ENCODE measurements at regions of chr12 and their contacts with region 1.

Region 1: DNA sequence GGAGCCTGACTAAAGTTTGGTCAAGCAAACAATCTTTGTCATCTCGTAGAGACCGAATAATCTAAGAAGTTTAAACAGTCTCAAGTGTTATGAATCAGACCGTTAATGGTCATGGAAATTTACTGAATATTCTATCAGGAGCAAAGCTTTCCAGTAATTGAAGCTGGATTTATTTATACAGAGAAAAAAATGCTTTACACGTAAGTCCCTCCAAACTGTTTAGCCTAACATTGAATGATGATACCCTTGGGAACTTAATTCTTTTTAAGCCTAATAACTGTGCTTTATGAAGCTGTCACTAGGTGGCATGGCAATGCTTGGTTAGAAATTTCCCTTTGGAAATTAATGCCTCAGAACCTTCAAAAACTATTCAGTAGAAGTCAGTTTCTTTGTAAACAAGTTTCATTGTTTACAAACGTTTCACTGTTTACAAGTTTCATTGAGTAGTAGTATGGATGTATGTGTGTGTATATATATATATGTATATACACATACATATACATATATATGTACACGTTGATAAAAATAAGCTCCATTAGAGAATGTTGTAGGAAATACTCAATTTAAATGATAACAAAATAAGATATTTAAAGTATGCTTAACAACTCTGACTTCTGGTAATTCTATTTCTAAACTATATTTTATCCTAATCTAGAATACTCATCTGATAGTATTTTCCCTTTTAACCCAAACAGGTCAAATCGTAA is 32.1 kb downstream of the DEPDC4 start:
- DNase-seq: no peak
- ATAC-seq: peak in 2 of 4 donors; percentile 48 to 76
- H3K4me3 ChIP-seq: peak overlapping the region in 1 of 12 donors; percentile 13
- H3K27ac ChIP-seq: peak overlapping the region in 4 of 12 donors; percentile 0 to 28 (median 15)
- H3K4me1 ChIP-seq: peaks cover 0 to 7% (median 0%) of the 10 kb centered on the region in 12 donors
- H3K27me3 ChIP-seq: no peaks in the 10 kb centered on the region
- CTCF ChIP-seq: peak; percentile 53 to 84 (median 72)
- POLR2A ChIP-seq: no peak

Region 2: GRCh38 chr12:99966429-99966828 is 268.3 kb before region 1 on chr12:
- intact Hi-C with region 1: no loop called
- DNase-seq: no peak
- ATAC-seq: no peak
- H3K4me3 ChIP-seq: no peak overlapping the region
- H3K27ac ChIP-seq: no peak overlapping the region
- H3K4me1 ChIP-seq: no peaks in the 10 kb centered on the region
- H3K27me3 ChIP-seq: no peaks in the 10 kb centered on the region
- CTCF ChIP-seq: no peak
- POLR2A ChIP-seq: no peak

Region 3: DNA sequence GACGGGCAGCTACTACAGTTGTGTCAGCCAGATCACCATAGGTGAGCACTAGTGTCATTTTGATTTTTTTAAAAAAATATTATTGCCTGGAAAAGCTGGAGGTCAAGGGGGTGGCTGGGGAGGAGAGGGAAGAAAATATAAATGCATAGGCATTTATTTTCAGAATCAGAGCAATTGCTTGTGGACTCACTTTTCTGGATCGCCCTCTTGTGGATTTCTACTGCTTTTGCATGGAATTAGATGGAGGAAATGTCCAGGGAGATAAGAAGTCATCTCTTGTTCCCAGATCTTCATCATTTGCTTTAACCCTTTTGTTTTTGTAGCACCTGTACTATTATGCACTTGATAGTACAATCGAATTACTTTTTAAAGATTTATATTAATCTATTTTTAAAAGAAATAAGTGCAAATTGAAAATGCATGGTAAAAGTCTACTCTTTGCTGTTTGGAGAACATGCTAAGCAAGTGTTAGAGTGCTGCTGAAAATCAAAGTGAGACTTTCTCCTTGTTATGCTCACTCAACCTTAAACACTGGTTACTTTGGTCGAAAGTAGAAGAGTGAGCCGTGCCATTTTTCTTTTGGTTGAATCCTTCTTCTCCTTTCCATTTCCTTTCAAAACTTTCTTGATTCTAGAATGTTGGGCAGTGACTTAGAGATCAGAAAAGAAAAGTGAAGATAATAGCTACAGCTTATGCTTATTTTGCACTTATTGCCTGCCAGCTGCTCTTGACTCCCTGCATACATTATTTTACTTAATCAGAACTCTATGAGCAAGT is 499.3 kb after region 1 on chr12:
- intact Hi-C with region 1: loop called in 7 of 10 experiments (anchors 2 to 10 kb)
- DNase-seq: no peak
- ATAC-seq: no peak
- H3K4me3 ChIP-seq: no peak overlapping the region
- H3K27ac ChIP-seq: no peak overlapping the region
- H3K4me1 ChIP-seq: no peaks in the 10 kb centered on the region
- H3K27me3 ChIP-seq: peaks cover 0 to 27% (median 0%) of the 10 kb centered on the region in 9 donors
- CTCF ChIP-seq: peak in 10 of 12 donors; percentile 21 to 65 (median 48)
- POLR2A ChIP-seq: no peak

Measured in heart left ventricle (tissue), 16 donors.